ENCODE measurements at regions of chr17 and their contacts with region 1.

Region 1: GRCh38 chr17:40443583-40444327 is 505 bp downstream of the IGFBP4 start:
- DNase-seq: peak; percentile 69
- ATAC-seq: peak; percentile 68
- H3K4me3 ChIP-seq: peak overlapping the region; percentile 38 to 81 (median 67)
- H3K27ac ChIP-seq: no peak overlapping the region
- H3K4me1 ChIP-seq: peaks cover 58% of the 10 kb centered on the region
- H3K27me3 ChIP-seq: peaks cover 1 to 6% of the 10 kb centered on the region in 2 experiments; a peak in 3 of 5 replicates
- CTCF ChIP-seq: peak; percentile 92
- EP300 ChIP-seq: no peak
- POLR2A ChIP-seq: no peak
- RAD21 ChIP-seq: peak; percentile 87

Region 2: GRCh38 chr17:40432864-40433528 is 10.8 kb before region 1 on chr17:
- CTCF ChIA-PET with region 1: no interaction called
- POLR2A ChIA-PET with region 1: no interaction called
- in situ Hi-C with region 1: no loop called
- intact Hi-C with region 1: no loop called
- DNase-seq: no peak
- ATAC-seq: peak; percentile 33
- H3K4me3 ChIP-seq: no peak overlapping the region
- H3K27ac ChIP-seq: no peak overlapping the region
- H3K4me1 ChIP-seq: peaks cover 8% of the 10 kb centered on the region; the same call in 1 of the 2 replicates
- H3K27me3 ChIP-seq: peaks cover 3 to 16% of the 10 kb centered on the region in 2 experiments; a peak in 3 of 5 replicates
- CTCF ChIP-seq: no peak
- EP300 ChIP-seq: no peak
- POLR2A ChIP-seq: no peak
- RAD21 ChIP-seq: no peak

Region 3: DNA sequence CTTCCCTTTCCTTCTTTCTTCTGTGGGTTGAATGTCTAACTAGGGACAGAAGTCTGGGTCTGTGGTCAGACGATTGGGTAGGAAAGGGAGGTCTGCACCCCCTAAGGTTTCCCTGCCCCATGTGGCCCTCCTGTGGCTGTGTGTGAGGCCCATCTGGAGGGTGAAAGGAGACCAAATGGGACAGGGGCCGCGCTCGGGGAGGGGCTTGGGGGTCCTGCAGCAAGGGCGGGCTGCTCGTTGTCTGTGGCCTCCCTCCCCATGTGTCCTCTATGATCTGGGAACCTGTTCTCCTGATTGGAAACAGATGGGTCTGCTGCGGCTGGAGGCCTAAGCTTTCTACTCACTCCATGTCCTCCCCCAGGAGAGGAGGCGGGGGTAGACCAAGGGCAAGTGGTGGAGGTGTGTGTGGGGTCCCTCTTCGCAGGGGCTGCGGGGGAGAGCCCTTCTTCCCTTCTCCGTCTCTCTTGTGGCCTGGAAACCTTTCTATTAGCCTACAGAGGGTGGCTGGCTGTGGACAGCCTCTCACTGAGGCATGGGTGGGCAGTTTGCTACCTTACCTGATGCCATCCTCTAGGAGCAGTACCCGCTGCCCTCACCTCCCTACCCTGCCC is 18.1 kb after region 1 on chr17:
- CTCF ChIA-PET with region 1: no interaction called
- POLR2A ChIA-PET with region 1: interaction called, 4 read pairs
- in situ Hi-C with region 1: no loop called
- intact Hi-C with region 1: loop called (anchors 2 kb)
- DNase-seq: no peak
- ATAC-seq: no peak
- H3K4me3 ChIP-seq: no peak overlapping the region
- H3K27ac ChIP-seq: no peak overlapping the region
- H3K4me1 ChIP-seq: peaks cover 52% of the 10 kb centered on the region
- H3K27me3 ChIP-seq: peaks cover 3 to 25% of the 10 kb centered on the region in 2 experiments
- CTCF ChIP-seq: no peak
- EP300 ChIP-seq: no peak
- POLR2A ChIP-seq: no peak
- RAD21 ChIP-seq: no peak

Region 4: DNA sequence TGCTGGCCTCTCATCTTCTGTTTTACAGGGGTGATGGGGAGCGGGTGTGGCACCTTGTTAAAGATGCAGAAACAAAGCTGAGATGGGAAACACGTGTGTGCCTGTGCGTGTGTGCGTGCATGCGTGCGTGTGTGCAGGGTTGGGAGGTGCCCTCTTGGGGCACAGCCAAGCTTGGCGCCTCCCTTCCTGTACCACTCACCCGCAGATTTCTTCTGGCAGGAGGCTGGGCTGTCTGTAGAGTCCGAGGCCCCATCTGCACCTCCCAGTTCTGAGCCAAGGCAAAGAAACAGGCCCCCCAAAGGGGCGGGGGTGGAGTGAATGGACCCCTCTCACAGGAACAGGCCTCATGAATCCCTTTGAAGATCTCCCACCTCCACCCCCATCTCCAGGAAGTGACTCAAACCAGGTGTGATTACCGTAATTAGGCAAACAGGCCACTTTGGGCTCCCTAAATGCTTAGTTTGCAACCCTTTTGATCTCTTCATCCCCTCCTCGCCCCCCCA is 36.8 kb after region 1 on chr17:
- CTCF ChIA-PET with region 1: interaction called, 8 read pairs
- POLR2A ChIA-PET with region 1: interaction called, 8 read pairs
- in situ Hi-C with region 1: no loop called
- intact Hi-C with region 1: loop called (anchors 1 kb)
- DNase-seq: peak; percentile 68
- ATAC-seq: peak; percentile 11; the same call in 1 of the 3 replicates
- H3K4me3 ChIP-seq: no peak overlapping the region
- H3K27ac ChIP-seq: no peak overlapping the region
- H3K4me1 ChIP-seq: peaks cover 52% of the 10 kb centered on the region
- H3K27me3 ChIP-seq: no peaks in the 10 kb centered on the region
- CTCF ChIP-seq: no peak
- EP300 ChIP-seq: peak in 1 of 2 experiments; percentile 64; a peak in 1 of 4 replicates
- POLR2A ChIP-seq: no peak
- RAD21 ChIP-seq: no peak

Measured in HepG2 (cell line).